Mammary epithelial cell (primary cell): ENCODE measurements at regions of chr12 and their contacts with region 1.

Region 1: GRCh38 chr12:111024205-111024801 is 103.9 kb upstream of the MYL2 start:
- DNase-seq: peak; percentile 43
- H3K4me3 ChIP-seq: no peak overlapping the region
- H3K27ac ChIP-seq: no peak overlapping the region
- H3K4me1 ChIP-seq: no peaks in the 10 kb centered on the region
- H3K27me3 ChIP-seq: peaks cover 7% of the 10 kb centered on the region
- CTCF ChIP-seq: peak; percentile 71 to 94

Region 2: GRCh38 chr12:110896559-110896958 is 127.7 kb before region 1 on chr12:
- CTCF ChIA-PET with region 1: no interaction called
- dilution Hi-C with region 1: no loop called
- in situ Hi-C with region 1: loop called in 1 of 2 experiments (anchors 10 kb)
- intact Hi-C with region 1: loop called (anchors 1 kb)
- DNase-seq: peak; percentile 98
- H3K4me3 ChIP-seq: no peak overlapping the region
- H3K27ac ChIP-seq: peak overlapping the region; percentile 90
- H3K4me1 ChIP-seq: peaks cover 30% of the 10 kb centered on the region
- H3K27me3 ChIP-seq: no peaks in the 10 kb centered on the region
- CTCF ChIP-seq: no peak

Region 3: GRCh38 chr12:110906985-110907384 is 117.3 kb before region 1 on chr12:
- CTCF ChIA-PET with region 1: no interaction called
- dilution Hi-C with region 1: no loop called
- in situ Hi-C with region 1: no loop called
- intact Hi-C with region 1: no loop called
- DNase-seq: no peak
- H3K4me3 ChIP-seq: no peak overlapping the region
- H3K27ac ChIP-seq: no peak overlapping the region
- H3K4me1 ChIP-seq: peaks cover 12% of the 10 kb centered on the region
- H3K27me3 ChIP-seq: no peaks in the 10 kb centered on the region
- CTCF ChIP-seq: no peak

Region 4: GRCh38 chr12:111156301-111156700 is 132.0 kb after region 1 on chr12:
- CTCF ChIA-PET with region 1: no interaction called
- dilution Hi-C with region 1: no loop called
- in situ Hi-C with region 1: no loop called
- intact Hi-C with region 1: loop called (anchors 5 kb)
- DNase-seq: peak; percentile 10
- H3K4me3 ChIP-seq: no peak overlapping the region
- H3K27ac ChIP-seq: no peak overlapping the region
- H3K4me1 ChIP-seq: no peaks in the 10 kb centered on the region
- H3K27me3 ChIP-seq: no peaks in the 10 kb centered on the region
- CTCF ChIP-seq: peak in 1 of 2 donors; percentile 31

Region 5: DNA sequence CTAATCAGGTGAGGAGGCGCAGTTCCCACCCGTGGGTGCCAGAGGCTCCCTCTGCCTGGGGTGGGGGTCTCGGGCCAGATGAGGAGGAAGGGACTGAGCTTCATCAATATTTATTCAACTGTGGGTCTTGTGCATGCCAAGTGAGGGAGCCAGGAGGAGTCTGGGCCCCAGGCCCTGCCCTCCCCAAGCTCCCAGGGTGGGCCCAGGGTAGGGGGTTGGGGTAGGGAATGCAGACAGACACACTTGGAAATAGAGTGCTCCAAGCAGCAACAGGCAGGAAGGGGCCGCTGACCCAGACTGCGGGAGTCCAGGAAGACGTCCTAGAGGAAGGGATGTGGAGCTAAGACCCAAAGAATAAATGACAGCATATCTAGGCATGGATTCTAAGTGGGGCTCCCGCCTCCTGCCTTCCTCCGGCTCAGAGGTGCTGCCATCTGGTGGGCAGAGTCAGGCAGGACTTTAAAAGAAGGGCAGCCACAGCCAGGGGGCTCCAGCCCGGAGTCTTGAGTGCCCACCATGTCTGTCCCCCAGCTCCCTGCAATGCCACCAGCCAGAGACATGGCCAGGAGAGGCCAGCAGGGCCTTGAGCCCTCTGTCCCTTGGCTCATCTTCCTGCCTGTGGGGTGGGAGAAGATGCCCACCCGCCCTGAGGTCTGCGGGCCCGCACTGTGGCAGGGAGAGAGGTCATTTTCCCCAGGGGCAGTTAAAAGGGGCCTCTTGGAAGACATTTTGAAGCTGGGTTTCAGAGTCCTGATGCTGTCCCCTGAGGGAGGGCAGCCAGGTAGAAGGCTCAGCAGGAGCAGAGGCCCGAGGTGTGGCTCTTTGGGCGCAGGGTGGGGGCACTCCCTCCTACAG is 274.5 kb after region 1 on chr12:
- CTCF ChIA-PET with region 1: interaction called, 3 read pairs
- dilution Hi-C with region 1: no loop called
- in situ Hi-C with region 1: loop called in 1 of 2 experiments (anchors 10 kb)
- intact Hi-C with region 1: loop called (anchors 1 kb)
- DNase-seq: peak; percentile 22
- H3K4me3 ChIP-seq: no peak overlapping the region
- H3K27ac ChIP-seq: no peak overlapping the region
- H3K4me1 ChIP-seq: no peaks in the 10 kb centered on the region
- H3K27me3 ChIP-seq: no peaks in the 10 kb centered on the region
- CTCF ChIP-seq: peak; percentile 72 to 85

Region 6: GRCh38 chr12:111451649-111452129 is 427.4 kb after region 1 on chr12:
- CTCF ChIA-PET with region 1: no interaction called
- dilution Hi-C with region 1: loop called (anchors 10 kb)
- in situ Hi-C with region 1: no loop called
- intact Hi-C with region 1: no loop called
- DNase-seq: peak; percentile 26
- H3K4me3 ChIP-seq: no peak overlapping the region
- H3K27ac ChIP-seq: no peak overlapping the region
- H3K4me1 ChIP-seq: no peaks in the 10 kb centered on the region
- H3K27me3 ChIP-seq: no peaks in the 10 kb centered on the region
- CTCF ChIP-seq: peak; percentile 74 to 79